Mammary epithelial cell (primary cell): ENCODE measurements at regions of chr5 and their contacts with region 1.

Region 1: DNA sequence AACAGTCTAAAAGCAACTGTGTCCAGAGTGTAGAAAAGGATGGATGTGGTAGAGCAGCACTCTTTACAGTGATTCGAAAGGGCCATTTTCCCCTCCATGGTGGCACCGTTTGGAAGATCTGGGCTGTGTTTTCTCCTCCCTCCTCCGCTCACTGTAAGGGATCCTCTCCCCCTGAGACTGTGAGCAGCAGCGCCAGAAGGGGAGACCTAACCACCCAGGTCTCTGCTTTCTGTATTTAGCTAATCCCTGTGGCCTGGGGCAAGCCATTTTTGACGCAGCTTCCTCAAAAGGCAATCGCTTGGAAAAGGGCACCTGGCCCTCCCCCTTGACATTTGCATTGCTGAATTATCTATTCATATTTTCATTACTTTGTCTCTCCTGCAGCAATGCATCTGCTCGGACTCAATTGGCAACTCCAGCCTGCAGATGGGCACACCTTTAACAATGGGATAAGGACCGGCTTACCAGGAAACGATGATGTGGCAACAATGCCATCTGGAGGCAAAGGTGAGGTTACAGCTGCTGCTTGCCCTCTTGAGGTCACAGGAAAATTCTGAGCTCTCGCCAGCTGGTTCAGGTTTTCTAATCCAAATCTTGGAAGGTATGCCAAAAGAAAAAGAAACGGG is 244.3 kb upstream of the WWC1 start:
- DNase-seq: peak; percentile 50
- H3K4me3 ChIP-seq: no peak overlapping the region
- H3K27ac ChIP-seq: no peak overlapping the region
- H3K4me1 ChIP-seq: no peaks in the 10 kb centered on the region
- H3K27me3 ChIP-seq: no peaks in the 10 kb centered on the region
- CTCF ChIP-seq: peak; percentile 59 to 66

Region 2: DNA sequence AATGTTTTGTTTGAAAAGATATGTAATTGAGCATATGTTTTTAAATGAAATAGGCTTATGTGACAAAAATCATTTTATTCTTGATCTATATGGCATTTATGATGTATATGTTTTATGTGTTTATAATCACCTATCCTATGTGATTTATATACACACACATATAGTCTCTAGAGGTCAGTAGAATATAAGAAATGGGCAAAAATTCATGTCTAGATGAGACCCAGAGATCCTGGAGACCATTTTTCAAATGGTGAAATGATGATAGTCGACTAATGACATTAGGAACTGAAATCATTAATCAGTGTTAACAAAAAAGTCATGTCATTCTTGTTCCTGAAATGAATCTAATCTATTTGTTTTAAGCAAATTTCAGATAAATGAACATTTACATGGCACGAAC is 464.9 kb before region 1 on chr5:
- CTCF ChIA-PET with region 1: no interaction called
- dilution Hi-C with region 1: no loop called
- in situ Hi-C with region 1: loop called in 1 of 2 experiments (anchors 25 kb)
- intact Hi-C with region 1: loop called (anchors 1 kb)
- DNase-seq: peak; percentile 10
- H3K4me3 ChIP-seq: no peak overlapping the region
- H3K27ac ChIP-seq: no peak overlapping the region
- H3K4me1 ChIP-seq: no peaks in the 10 kb centered on the region
- H3K27me3 ChIP-seq: no peaks in the 10 kb centered on the region
- CTCF ChIP-seq: peak; percentile 29 to 41

Region 3: DNA sequence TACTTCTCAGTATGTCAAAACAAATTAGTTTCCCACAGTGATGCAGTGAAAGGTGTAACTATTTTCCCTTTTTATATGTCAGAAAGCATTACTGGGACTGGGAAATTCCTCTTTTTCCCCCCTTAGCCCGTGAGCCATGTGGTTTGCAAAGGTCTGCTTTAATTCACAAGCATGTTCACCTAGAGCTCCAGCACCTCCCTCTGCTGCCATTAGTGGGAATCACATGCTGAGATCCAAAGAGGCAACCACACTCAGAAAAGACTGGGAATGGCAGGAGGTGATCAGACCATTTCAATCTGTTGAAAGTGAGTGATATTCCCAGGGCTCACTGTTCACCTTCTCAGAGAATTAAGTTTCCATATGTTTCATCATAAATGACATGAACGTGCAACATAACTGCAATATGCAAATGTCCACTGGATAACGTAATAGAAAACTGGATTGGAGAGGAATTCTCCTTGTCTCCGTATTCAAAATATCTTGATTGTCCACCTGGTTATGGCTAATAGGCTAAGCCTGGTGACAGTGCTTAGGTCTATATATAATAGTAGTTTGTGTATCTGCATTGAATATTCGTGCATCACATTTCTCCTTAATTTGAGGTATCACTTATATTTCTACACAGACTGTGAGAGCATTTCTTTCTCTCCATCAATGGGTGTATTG is 459.3 kb before region 1 on chr5:
- CTCF ChIA-PET with region 1: no interaction called
- dilution Hi-C with region 1: no loop called
- in situ Hi-C with region 1: loop called in 1 of 2 experiments (anchors 25 kb)
- intact Hi-C with region 1: loop called (anchors 1 kb)
- DNase-seq: peak; percentile 30
- H3K4me3 ChIP-seq: no peak overlapping the region
- H3K27ac ChIP-seq: no peak overlapping the region
- H3K4me1 ChIP-seq: no peaks in the 10 kb centered on the region
- H3K27me3 ChIP-seq: no peaks in the 10 kb centered on the region
- CTCF ChIP-seq: peak; percentile 48 to 67

Region 4: GRCh38 chr5:167820101-167820990 is 226.8 kb before region 1 on chr5:
- CTCF ChIA-PET with region 1: no interaction called
- dilution Hi-C with region 1: no loop called
- in situ Hi-C with region 1: no loop called
- intact Hi-C with region 1: loop called (anchors 1 kb)
- DNase-seq: peak; percentile 7
- H3K4me3 ChIP-seq: peak overlapping the region; percentile 30 to 66 (median 61)
- H3K27ac ChIP-seq: peak overlapping the region; percentile 87
- H3K4me1 ChIP-seq: peaks cover 43% of the 10 kb centered on the region
- H3K27me3 ChIP-seq: no peaks in the 10 kb centered on the region
- CTCF ChIP-seq: no peak

Region 5: GRCh38 chr5:167870055-167870454 is 177.1 kb before region 1 on chr5:
- CTCF ChIA-PET with region 1: no interaction called
- dilution Hi-C with region 1: no loop called
- in situ Hi-C with region 1: no loop called
- intact Hi-C with region 1: no loop called
- DNase-seq: no peak
- H3K4me3 ChIP-seq: no peak overlapping the region
- H3K27ac ChIP-seq: no peak overlapping the region
- H3K4me1 ChIP-seq: no peaks in the 10 kb centered on the region
- H3K27me3 ChIP-seq: no peaks in the 10 kb centered on the region
- CTCF ChIP-seq: no peak

Region 6: DNA sequence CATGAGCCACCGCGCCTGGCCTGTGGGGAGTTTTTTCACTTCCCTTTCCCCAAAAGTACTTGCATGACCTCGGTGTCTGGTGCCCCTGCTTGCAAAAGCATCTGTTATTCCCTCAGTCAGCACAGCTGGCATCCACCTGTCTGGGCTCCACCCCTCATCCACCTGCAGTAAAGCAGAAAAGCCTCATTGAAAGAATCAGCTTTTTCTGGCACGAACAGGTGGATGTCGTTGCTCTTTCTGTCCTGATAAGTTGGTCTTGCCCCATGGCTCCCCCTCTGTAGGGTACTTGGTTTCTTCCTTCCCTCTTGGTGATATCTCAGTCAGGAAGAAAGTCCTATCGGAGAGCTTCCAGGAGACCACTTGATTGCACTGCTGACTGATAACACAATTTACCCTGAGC is 281.7 kb after region 1 on chr5:
- CTCF ChIA-PET with region 1: no interaction called
- dilution Hi-C with region 1: no loop called
- in situ Hi-C with region 1: no loop called
- intact Hi-C with region 1: no loop called
- DNase-seq: no peak
- H3K4me3 ChIP-seq: no peak overlapping the region
- H3K27ac ChIP-seq: no peak overlapping the region
- H3K4me1 ChIP-seq: peaks cover 31% of the 10 kb centered on the region
- H3K27me3 ChIP-seq: no peaks in the 10 kb centered on the region
- CTCF ChIP-seq: no peak